B cell (primary cell): ENCODE measurements at regions of chr12 and their contacts with region 1.

Region 1: DNA sequence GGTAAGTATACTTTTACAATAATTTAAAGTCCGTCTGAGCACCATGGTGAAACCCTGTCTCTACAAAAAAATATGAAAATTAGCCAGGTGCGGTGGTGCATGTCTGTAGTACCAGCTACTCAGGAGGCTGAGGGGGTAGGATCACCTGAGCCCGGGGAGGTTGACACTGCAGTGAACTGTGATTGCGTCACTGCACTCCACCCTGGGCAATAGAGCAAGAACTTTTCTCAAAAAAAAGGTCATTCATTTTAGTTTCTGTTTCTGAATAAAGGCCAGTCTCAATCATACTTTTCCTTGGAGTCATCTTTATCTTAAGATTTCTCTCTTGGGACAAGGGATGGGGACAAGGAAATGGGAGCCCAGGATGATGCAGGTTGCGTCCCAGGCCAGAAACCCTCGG is 12.9 kb downstream of the ANKRD13A start:
- DNase-seq: peak; percentile 94
- ATAC-seq: peak; percentile 95
- H3K4me3 ChIP-seq: peak overlapping the region in 3 of 5 experiments; percentile 40 to 53 (median 43)
- H3K4me3 Mint-ChIP-seq: peak overlapping the region; percentile 91
- H3K27ac ChIP-seq: peak overlapping the region; percentile 89 to 97
- H3K27ac Mint-ChIP-seq: peak overlapping the region; percentile 95
- H3K4me1 ChIP-seq: peaks cover 57 to 69% of the 10 kb centered on the region in 2 donors
- H3K4me1 Mint-ChIP-seq: peaks cover 64% of the 10 kb centered on the region
- H3K27me3 ChIP-seq: no peaks in the 10 kb centered on the region
- H3K27me3 Mint-ChIP-seq: no peaks in the 10 kb centered on the region
- CTCF ChIP-seq: no peak

Region 2: DNA sequence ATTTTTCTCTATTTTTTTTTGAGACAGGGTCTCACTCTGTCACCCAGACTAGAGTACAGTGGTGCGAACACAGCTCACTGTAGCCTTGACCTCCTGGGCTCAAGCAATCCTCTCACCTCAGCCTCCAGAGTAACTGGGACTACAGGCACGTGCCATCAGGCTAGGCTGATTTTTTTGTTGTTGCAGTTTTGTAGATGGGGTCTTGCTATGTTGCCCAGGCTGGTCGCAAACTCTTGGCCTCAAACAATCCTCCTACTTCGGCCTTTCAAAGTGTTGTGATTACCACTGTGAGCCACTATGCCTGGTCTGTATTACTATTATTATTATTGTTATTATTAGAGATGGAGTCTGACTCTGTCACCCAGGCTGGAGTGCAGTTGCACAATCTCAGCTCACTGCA is 39.3 kb before region 1 on chr12:
- CTCF ChIA-PET with region 1: no interaction called
- POLR2A ChIA-PET with region 1: interaction called, 4 read pairs
- intact Hi-C with region 1: loop called (anchors 2 kb)
- DNase-seq: no peak
- ATAC-seq: no peak
- H3K4me3 ChIP-seq: no peak overlapping the region
- H3K4me3 Mint-ChIP-seq: no peak overlapping the region
- H3K27ac ChIP-seq: peak overlapping the region in 1 of 2 donors; percentile 68
- H3K27ac Mint-ChIP-seq: peak overlapping the region; percentile 28
- H3K4me1 ChIP-seq: peaks cover 7 to 14% of the 10 kb centered on the region in 2 donors
- H3K4me1 Mint-ChIP-seq: peaks cover 13% of the 10 kb centered on the region
- H3K27me3 ChIP-seq: no peaks in the 10 kb centered on the region
- H3K27me3 Mint-ChIP-seq: no peaks in the 10 kb centered on the region
- CTCF ChIP-seq: no peak

Region 3: DNA sequence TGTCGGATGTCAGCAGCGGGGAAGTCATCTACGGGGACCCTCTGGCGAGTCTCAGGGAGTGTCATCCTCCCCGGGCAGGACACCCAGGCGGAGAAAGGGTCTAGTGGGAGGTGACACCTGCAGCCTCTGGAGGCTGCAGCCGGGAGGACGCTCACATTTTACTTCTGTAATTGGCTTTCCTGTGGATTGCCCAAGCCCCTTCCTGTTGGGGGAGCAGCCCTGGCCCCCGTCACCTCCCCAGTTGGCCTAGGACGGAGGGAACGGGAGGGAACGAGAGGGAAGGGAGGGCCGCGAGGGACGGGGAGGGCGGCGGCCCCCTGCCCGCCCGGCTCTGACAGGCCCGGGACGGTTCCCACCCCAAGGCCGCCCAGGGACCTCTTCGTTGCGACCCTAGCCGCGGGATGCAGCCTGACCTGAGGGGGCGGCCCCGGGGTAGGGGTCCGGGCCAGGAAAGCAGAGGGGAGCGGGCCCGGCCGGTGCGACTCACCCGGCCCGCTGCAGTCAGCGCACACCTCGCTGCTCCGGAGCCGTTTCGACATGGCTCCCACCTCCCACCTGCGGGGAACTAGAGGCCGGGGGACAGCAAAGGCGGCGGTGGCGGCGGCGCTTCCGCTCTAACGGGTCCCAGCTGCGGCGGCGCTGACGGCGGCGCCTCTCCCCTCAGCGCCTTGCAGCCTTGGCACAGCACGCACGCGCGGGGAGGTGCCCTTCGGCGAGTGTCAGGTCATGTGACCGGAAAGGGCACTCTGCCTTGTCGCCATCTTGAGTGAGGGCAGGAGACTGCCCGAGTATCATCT is 16.3 kb before region 1 on chr12 and contains the start of gene GIT2:
- CTCF ChIA-PET with region 1: interaction called, 46 read pairs
- POLR2A ChIA-PET with region 1: interaction called, 32 read pairs
- intact Hi-C with region 1: loop called (anchors 1 kb)
- DNase-seq: peak; percentile 95
- ATAC-seq: peak; percentile 69
- H3K4me3 ChIP-seq: peak within 1 kb of the TSS; percentile 68 to 99 (median 74)
- H3K4me3 Mint-ChIP-seq: peak within 1 kb of the TSS; percentile 90
- H3K27ac ChIP-seq: peak within 1 kb of the TSS; percentile 69 to 90
- H3K27ac Mint-ChIP-seq: peak within 1 kb of the TSS; percentile 91
- H3K4me1 ChIP-seq: peaks cover 39 to 47% of the 10 kb centered on the region in 2 donors
- H3K4me1 Mint-ChIP-seq: peaks cover 67% of the 10 kb centered on the region
- H3K27me3 ChIP-seq: no peaks in the 10 kb centered on the region
- H3K27me3 Mint-ChIP-seq: no peaks in the 10 kb centered on the region
- CTCF ChIP-seq: no peak
- total RNA-seq, gene GIT2: 163 and 177 TPM in 2 replicates

Region 4: GRCh38 chr12:110033888-110034287 is 21.8 kb after region 1 on chr12:
- CTCF ChIA-PET with region 1: no interaction called
- POLR2A ChIA-PET with region 1: no interaction called
- intact Hi-C with region 1: loop called (anchors 2 kb)
- DNase-seq: no peak
- ATAC-seq: no peak
- H3K4me3 ChIP-seq: no peak overlapping the region
- H3K4me3 Mint-ChIP-seq: no peak overlapping the region
- H3K27ac ChIP-seq: no peak overlapping the region
- H3K27ac Mint-ChIP-seq: no peak overlapping the region
- H3K4me1 ChIP-seq: no peaks in the 10 kb centered on the region
- H3K4me1 Mint-ChIP-seq: peaks cover 3% of the 10 kb centered on the region
- H3K27me3 ChIP-seq: no peaks in the 10 kb centered on the region
- H3K27me3 Mint-ChIP-seq: no peaks in the 10 kb centered on the region
- CTCF ChIP-seq: no peak